ENCODE measurements at regions of chr14 and their contacts with region 1.

Region 1: DNA sequence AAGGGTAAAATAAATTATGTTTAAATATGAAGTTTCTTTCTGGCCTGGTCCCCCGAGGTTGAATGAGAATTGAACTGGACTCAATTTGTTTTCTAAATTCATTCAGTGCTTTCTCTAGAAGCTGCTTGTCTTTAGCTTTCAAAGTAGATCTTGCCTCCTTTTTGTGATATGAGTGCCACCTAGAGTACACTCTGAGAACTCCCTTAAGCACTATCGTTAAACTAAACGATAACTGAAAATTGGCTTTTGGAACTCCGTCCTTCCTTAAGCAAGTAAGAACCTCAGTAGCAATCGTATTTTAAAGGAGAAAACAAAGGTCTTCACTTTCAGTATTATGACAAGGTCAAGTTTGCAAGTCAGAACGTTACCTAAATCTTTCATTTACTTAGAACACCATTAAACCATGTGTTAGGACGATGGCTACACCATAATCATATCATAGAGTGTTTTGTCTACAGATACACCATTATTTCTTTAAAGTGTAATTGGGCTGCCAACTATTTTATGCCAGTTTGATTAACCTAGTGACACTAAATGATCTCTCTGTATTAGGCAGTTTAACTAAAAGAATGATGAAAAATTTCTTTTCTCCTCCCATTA is 364.8 kb downstream of the SNAPC1 start:
- DNase-seq: peak; percentile 73
- H3K4me3 ChIP-seq: no peak overlapping the region
- H3K27ac ChIP-seq: no peak overlapping the region
- H3K4me1 ChIP-seq: no peaks in the 10 kb centered on the region
- H3K27me3 ChIP-seq: peaks cover 24% of the 10 kb centered on the region

Region 2: GRCh38 chr14:61444215-61444768 is 682.7 kb before region 1 on chr14:
- in situ Hi-C with region 1: loop called (anchors 10 kb)
- DNase-seq: no peak
- H3K4me3 ChIP-seq: no peak overlapping the region
- H3K27ac ChIP-seq: no peak overlapping the region
- H3K4me1 ChIP-seq: 0 out of 2 replicates have a peak, but pooled peaks cover 2% of the 10 kb centered on the region
- H3K27me3 ChIP-seq: peaks cover 43% of the 10 kb centered on the region

Region 3: DNA sequence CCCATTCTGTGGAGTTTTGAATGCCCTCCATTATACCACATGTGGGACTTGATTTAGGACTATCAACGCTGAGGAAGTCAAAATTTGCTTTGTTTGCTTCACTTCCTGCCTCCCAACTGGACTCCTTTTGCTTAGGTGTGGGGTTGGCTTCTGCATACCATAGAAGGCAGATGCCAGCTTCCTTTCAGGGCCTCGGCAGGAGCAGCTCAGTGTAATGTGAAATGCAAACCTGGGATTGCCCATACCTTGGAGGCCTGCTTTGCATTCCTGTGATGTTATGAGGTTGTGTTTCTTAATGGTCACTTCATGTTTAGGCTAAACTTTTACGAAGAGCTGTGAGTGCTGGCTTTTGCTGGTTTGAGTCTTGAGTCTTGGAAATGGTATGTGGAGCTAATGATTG is 222.8 kb before region 1 on chr14:
- in situ Hi-C with region 1: loop called (anchors 10 kb)
- DNase-seq: no peak
- H3K4me3 ChIP-seq: no peak overlapping the region
- H3K27ac ChIP-seq: no peak overlapping the region
- H3K4me1 ChIP-seq: no peaks in the 10 kb centered on the region
- H3K27me3 ChIP-seq: peaks cover 19% of the 10 kb centered on the region